ENCODE measurements at regions of chr18 and their contacts with region 1.

Region 1: DNA sequence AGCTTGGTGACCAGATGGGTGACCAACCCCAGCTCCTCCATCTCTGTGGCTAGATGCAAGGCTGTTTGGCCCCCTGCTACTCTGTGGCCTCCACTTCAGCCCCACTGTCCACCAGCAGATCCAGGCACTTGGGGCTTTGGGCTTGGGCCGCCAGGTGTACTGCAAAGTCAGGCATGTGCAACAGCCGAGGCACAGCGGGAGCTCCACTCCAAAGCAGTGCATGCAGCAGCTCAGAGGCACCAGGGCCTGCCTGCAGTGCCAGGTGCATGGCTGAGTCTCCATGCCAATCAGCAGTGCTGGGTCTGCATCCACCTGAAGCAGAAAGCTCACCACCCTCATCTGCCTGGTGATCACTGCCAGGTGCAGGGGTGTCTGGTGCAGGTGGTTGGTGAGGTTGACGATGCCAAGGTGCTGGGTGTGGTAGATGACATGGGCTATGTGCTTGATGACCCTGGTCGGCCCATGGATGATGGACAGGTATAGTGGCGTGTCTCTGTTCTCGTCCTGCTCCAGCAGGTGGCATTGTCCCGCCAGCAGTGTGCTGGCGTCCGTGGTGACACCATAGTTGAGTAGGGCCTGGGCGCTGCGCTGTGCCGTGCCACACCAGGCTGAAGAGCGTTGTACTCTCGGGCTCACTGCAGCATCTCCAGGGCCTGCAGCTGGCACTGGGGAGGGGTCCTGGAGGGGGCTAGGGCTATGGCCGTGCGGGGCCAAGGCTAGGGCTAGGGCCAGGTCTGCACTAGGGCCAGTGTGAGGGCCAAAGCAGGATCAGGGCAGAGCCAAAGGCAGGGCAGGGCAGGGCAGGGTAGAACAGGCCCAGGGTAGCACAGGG is 1.0 kb upstream of the ANKRD62 start:
- DNase-seq: peak in 1 of 2 experiments; percentile 61
- H3K4me3 ChIP-seq: no peak overlapping the region
- H3K27ac ChIP-seq: no peak overlapping the region
- H3K4me1 ChIP-seq: no peaks in the 10 kb centered on the region
- H3K27me3 ChIP-seq: no peaks in the 10 kb centered on the region; a peak in 1 of 7 replicates
- CTCF ChIP-seq: peak in 2 of 3 experiments; percentile 76 to 84; a peak in 3 of 4 replicates
- EP300 ChIP-seq: no peak
- POLR2A ChIP-seq: no peak
- RAD21 ChIP-seq: peak; percentile 85 to 87

Region 2: DNA sequence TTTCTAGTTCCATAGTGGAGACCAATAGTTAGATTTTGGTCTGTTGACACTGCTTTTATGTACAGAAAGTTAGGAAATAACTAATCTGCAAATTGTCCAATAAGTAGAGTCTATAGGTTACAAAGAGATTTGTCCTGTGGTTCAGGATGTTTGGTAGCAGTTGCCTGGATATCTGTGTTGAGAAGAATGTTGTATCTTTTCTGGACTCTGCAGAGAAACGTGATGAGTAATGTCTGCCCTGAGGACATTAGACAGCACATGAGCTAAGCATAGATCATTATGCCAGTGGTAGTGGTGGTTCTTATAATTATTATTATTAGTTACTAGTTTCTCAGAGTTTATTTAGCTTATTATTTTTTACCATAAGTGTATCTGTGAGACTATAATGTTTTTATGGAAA is 66.8 kb after region 1 on chr18:
- CTCF ChIA-PET with region 1: no interaction called
- POLR2A ChIA-PET with region 1: no interaction called
- DNase-seq: no peak
- H3K4me3 ChIP-seq: no peak overlapping the region
- H3K27ac ChIP-seq: no peak overlapping the region
- H3K4me1 ChIP-seq: no peaks in the 10 kb centered on the region
- H3K27me3 ChIP-seq: no peaks in the 10 kb centered on the region
- CTCF ChIP-seq: no peak
- EP300 ChIP-seq: no peak
- POLR2A ChIP-seq: no peak
- RAD21 ChIP-seq: no peak

Region 3: DNA sequence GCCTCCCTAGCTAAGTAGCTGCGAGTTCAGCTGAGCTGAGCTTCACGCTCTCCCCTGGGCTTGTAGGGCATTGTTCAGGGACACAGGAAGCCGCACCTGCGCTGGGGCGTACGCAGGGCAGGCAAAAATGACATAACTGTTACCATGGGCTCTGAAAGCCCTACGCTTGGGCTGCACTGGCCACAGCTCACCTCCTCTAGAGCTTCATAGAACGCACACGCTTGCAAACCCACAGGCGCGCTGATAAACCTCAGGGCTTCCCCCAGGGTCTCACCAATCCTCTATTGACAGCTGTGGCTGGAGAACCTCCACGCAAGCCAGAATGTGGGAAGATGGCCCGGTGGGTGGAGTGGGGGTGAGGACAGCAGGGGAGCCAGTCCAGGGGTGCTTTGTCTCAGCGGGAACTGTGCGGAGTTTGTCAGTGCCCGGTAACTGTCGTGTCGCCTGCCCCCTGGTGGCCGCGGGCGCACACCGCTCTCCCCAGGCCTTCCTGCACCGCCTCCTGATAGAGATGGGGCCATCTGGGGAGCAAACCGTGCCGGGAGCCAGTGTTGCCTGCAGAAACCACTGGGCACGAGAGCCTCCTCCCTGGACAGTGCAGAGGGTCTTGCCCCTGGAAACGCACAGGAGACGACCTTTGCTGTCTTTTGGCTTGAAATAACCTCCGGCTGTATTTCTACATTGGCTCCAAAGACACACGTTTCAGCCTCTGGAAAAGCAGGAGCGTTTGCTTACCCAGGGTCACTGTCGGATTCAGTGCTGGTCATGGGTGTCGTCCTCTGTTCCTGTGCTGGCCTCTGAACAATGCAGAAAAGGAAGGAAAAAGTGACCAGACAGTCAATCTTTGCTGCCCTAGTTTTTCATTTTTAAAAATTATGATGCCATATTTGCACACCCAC is 144.6 kb after region 1 on chr18:
- CTCF ChIA-PET with region 1: interaction called, 58 read pairs
- POLR2A ChIA-PET with region 1: no interaction called
- DNase-seq: peak in 1 of 2 experiments; percentile 97
- H3K4me3 ChIP-seq: peak overlapping the region in 1 of 4 experiments; percentile 10; a peak in 1 of 8 replicates
- H3K27ac ChIP-seq: no peak overlapping the region
- H3K4me1 ChIP-seq: no peaks in the 10 kb centered on the region; a peak in 1 of 7 replicates
- H3K27me3 ChIP-seq: peaks cover 0 to 2% (median 0%) of the 10 kb centered on the region in 4 experiments; a peak in 1 of 7 replicates
- CTCF ChIP-seq: peak; percentile 94 to 98 (median 95)
- EP300 ChIP-seq: no peak
- POLR2A ChIP-seq: no peak
- RAD21 ChIP-seq: peak; percentile 70 to 80

Region 4: DNA sequence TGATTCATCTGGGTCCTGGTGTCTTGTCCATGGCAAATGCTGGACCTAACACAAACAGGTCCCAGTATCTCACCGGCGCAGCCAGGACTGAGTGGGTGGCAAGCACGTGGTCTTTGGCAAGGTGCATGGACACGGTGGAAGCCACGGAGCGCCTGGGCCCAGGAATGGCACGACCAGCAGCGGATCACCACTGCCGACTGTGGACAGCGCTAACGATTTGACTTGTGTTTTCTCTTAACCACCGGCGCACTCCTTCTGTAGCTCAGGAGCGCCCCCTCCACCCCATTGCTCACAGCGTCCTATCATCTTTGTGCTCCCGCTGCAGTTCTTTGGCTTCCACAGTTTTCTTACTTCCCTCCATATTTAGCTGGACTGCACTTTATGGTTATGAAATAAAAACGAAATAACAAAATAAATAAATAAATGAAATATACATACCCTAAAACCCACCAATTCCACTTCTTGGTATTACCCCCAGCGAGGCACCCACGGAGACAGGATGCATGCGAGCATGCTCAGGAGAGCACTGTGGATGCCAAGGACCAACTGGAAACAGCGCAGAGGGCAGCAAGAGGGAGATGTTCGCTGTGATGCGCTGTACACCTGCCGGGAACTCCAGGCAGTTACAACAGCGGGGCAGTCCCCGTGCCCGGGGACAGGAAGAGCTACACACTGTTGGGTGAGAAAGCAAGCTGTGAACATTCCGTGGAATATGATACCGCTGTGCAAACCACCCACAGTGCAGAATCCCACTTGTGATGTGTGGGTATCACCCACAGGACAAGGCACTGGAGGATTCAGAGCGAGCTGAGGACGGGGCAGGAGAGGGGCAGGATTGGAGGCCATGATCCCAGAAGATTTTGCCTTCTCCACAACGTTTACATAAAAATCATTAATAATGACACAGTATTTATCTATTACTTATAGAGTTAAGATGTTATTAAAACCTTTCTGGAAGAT is 154.5 kb after region 1 on chr18:
- CTCF ChIA-PET with region 1: interaction called, 16 read pairs
- POLR2A ChIA-PET with region 1: no interaction called
- DNase-seq: peak; percentile 44 to 85
- H3K4me3 ChIP-seq: no peak overlapping the region
- H3K27ac ChIP-seq: no peak overlapping the region
- H3K4me1 ChIP-seq: peaks cover 0 to 2% (median 0%) of the 10 kb centered on the region in 4 experiments; a peak in 2 of 7 replicates
- H3K27me3 ChIP-seq: peaks cover 0 to 23% (median 13%) of the 10 kb centered on the region in 4 experiments; a peak in 6 of 7 replicates
- CTCF ChIP-seq: peak in 2 of 3 experiments; percentile 84 to 85; a peak in 3 of 4 replicates
- EP300 ChIP-seq: no peak
- POLR2A ChIP-seq: no peak
- RAD21 ChIP-seq: peak; percentile 82 to 83

Measured in H1 (cell line).